Sigmoid colon (tissue), 7 donors: ENCODE measurements at regions of chr11 and their contacts with region 1.

Region 1: DNA sequence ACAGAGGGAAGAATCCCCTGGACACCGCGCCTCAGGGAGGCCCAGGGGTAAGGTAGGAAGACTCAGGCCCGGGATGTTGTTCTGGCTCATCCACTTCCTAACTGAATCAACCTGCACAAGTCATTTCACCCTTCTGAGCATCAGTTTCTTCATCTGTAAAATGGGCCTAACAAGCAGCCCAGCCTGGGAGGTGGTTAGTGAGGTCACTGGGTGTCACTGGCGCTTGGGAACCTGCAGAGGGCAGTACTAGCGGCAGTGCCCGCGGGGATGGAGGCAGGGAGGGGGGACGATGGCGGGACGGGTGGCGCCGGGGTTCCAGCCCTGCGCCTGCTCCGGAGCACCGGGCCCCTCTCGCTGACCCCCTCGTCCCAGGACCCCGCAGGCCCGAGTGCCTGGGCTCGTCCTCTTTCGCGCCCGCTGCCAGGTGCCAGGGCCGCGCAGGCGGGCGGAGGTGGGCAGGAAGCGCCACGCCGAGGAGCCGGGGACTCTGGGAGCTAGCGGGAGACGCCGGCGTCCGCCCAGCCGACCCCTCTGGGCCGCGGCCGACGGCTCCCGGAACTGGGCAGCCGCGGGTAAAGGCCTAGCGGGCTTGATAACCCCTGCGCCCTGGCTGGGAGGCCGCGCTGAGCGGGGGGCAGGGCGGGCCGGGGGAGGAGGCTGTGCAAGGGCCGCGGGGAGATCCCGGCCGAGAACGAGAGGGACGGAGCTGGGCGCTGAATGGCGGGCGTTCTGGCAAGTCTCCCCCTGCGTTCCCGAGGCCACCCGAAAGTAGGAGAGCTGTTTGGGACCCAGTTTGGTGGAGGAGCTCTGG is at the start of gene NLRX1:
- DNase-seq: peak; percentile 93
- H3K4me3 ChIP-seq: peak within 1 kb of the TSS; percentile 79 to 99 (median 94)
- H3K27ac ChIP-seq: peak within 1 kb of the TSS; percentile 95 to 99 (median 98)
- H3K4me1 ChIP-seq: peaks cover 0 to 9% (median 5%) of the 10 kb centered on the region in 4 donors
- H3K27me3 ChIP-seq: no peaks in the 10 kb centered on the region
- CTCF ChIP-seq: peak; percentile 85 to 92 (median 89)
- EP300 ChIP-seq: no peak
- POLR2A ChIP-seq: peak; percentile 69 to 71
- total RNA-seq, gene NLRX1: 10.7 to 21.9 (median 12.6) TPM

Region 2: GRCh38 chr11:118834427-118835028 is 334.1 kb before region 1 on chr11:
- intact Hi-C with region 1: no loop called
- DNase-seq: no peak
- H3K4me3 ChIP-seq: no peak overlapping the region
- H3K27ac ChIP-seq: no peak overlapping the region
- H3K4me1 ChIP-seq: no peaks in the 10 kb centered on the region
- H3K27me3 ChIP-seq: no peaks in the 10 kb centered on the region
- CTCF ChIP-seq: no peak
- EP300 ChIP-seq: no peak
- POLR2A ChIP-seq: no peak

Region 3: GRCh38 chr11:119084663-119085436 is 83.8 kb before region 1 on chr11 and contains the start of gene HMBS:
- intact Hi-C with region 1: no loop called
- DNase-seq: peak; percentile 98
- H3K4me3 ChIP-seq: peak within 1 kb of the TSS; percentile 62 to 82 (median 68)
- H3K27ac ChIP-seq: peak within 1 kb of the TSS; percentile 89 to 97 (median 92)
- H3K4me1 ChIP-seq: peaks cover 0 to 15% (median 14%) of the 10 kb centered on the region in 4 donors
- H3K27me3 ChIP-seq: no peaks in the 10 kb centered on the region
- CTCF ChIP-seq: no peak
- EP300 ChIP-seq: no peak
- POLR2A ChIP-seq: peak in 1 of 2 donors; percentile 29
- total RNA-seq, gene HMBS: 5.6 to 15.2 (median 6.6) TPM

Region 4: DNA sequence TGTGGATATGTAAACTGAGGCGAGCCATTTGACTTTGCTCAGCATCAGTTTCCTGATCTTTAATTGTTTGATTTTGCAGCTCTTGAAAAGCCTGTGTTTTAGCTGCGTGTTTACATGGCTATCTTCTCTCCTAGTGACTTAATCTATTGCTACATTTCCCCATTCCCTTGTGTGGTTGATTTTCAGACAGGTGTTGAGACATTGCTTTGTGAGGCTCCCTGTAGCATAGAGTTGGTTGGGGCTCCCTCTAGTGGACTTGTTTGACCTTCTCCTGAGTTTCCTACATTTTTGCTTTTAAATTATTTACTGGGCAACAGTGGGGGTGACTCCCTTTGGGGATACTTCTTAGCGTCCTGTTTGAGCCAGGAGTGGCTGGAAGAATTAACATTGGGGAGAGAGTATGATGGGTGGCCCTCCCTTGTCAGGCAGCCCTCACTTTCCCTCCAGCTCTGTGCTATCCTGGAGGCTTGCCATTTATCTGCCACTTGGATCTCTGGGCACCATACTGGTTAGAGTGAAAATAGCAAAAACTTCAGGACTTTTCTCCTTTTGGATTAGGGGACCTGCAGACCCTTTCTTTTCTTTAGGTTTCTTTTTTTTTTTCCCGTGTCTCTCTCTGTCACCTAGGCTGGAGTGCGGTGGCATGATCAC is 28.3 kb after region 1 on chr11:
- intact Hi-C with region 1: loop called (anchors 2 kb)
- DNase-seq: peak; percentile 77
- H3K4me3 ChIP-seq: no peak overlapping the region
- H3K27ac ChIP-seq: no peak overlapping the region
- H3K4me1 ChIP-seq: no peaks in the 10 kb centered on the region
- H3K27me3 ChIP-seq: no peaks in the 10 kb centered on the region
- CTCF ChIP-seq: peak; percentile 55 to 80 (median 72)
- EP300 ChIP-seq: no peak
- POLR2A ChIP-seq: no peak

Region 5: GRCh38 chr11:119323538-119324033 is 154.9 kb after region 1 on chr11:
- intact Hi-C with region 1: loop called (anchors 2 kb)
- DNase-seq: peak; percentile 91
- H3K4me3 ChIP-seq: no peak overlapping the region
- H3K27ac ChIP-seq: peak overlapping the region; percentile 69 to 99 (median 96)
- H3K4me1 ChIP-seq: peaks cover 0 to 51% (median 44%) of the 10 kb centered on the region in 4 donors
- H3K27me3 ChIP-seq: no peaks in the 10 kb centered on the region
- CTCF ChIP-seq: peak; percentile 78 to 86 (median 84)
- EP300 ChIP-seq: peak in 3 of 4 donors; percentile 13 to 85 (median 58)
- POLR2A ChIP-seq: no peak